HEK293 (cell line): ENCODE measurements at regions of chr19 and their contacts with region 1.

Region 1: DNA sequence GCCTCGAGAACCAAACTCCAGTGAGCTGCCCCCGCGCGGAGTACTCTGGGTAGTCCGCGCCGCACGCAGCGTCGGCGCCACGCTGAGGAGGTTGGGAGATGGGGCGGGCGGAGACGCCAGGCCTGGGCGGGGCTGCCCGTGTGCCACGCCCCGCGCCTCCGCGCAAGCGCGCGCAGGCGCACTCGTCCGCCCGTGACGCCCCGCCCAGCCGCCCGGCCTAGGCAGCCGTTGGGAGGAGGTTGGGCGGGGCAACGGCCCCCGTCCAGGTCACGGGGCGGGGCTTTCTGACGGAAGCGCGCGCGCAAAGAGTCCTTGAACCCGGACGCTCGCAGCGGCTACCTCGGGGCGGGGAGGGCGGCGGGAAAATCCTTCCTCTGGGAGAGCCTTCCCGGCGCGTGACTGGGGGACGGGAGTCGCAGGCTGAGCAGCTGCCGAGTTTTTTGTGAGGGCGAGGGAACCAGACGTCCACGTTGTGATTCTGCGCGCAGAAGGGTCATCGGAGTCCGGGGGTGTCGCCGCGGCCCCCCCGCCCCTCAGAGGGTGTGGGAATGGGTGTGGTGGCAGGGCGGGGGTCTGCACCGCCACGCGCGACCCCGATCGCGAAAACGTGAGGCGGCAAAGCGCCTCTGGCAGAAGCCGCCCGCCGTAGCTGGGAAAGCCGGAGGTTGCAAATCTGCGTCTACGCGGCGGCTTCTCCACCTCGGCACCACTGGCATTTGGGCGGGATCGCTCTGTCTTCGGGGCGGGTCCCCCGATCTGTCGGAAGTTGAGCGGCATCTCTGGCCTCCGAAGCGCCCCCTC is at the start of gene MED26:
- H3K4me3 ChIP-seq: peak within 1 kb of the TSS; percentile 89
- H3K27ac ChIP-seq: peak within 1 kb of the TSS; percentile 92
- H3K4me1 ChIP-seq: no peaks in the 10 kb centered on the region
- CTCF ChIP-seq: no peak

Region 2: DNA sequence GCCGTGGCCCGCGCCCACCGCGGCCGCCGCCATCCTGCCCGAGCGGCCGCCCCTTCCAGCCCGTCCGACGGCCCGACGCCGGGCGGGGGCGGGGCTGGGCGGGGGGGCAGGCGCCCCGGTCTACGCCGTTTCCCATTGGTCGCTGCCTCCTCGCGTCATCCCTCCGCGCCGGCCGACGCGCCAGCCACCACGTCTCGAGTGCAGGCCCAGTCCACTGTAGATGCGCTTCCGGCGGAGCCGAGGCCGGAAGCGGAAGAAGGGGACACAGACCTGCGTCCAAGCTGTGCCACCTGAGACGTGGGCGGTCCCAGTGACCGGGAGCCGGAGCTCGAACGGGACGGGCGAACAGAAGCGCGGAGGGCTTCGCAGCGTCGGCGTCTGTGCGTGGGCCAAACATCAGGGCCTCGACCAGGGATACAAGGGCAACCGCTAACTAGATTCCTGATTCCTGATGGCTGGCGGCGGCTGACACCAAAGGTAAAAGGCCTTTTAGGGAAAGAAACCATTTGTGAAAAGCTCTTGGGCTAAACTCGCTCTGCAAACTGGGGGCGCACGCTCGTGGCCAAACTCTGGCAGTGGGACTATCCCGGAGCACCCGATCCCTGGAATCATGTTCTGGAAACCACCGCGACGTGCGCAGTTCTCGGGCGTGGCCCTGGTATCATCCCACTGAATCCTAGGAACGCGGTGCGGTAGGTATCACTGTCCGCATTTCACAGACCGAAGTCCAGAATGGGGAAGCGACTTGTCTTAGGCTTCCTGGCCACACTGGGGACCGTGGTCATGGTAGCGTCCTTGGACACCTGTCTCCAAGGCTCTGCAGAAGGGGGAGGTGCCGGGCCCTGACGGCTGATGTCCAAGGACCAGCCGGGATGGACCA is 55.8 kb before region 1 on chr19 and contains the start of gene SLC35E1:
- CTCF ChIA-PET with region 1: no interaction called
- POLR2A ChIA-PET with region 1: interaction called, 12 read pairs
- H3K4me3 ChIP-seq: peak within 1 kb of the TSS; percentile 82
- H3K27ac ChIP-seq: peak within 1 kb of the TSS; percentile 76
- H3K4me1 ChIP-seq: peaks cover 2% of the 10 kb centered on the region; the same call in 1 of the 2 replicates
- CTCF ChIP-seq: no peak; the same call in 1 of the 2 replicates

Region 3: DNA sequence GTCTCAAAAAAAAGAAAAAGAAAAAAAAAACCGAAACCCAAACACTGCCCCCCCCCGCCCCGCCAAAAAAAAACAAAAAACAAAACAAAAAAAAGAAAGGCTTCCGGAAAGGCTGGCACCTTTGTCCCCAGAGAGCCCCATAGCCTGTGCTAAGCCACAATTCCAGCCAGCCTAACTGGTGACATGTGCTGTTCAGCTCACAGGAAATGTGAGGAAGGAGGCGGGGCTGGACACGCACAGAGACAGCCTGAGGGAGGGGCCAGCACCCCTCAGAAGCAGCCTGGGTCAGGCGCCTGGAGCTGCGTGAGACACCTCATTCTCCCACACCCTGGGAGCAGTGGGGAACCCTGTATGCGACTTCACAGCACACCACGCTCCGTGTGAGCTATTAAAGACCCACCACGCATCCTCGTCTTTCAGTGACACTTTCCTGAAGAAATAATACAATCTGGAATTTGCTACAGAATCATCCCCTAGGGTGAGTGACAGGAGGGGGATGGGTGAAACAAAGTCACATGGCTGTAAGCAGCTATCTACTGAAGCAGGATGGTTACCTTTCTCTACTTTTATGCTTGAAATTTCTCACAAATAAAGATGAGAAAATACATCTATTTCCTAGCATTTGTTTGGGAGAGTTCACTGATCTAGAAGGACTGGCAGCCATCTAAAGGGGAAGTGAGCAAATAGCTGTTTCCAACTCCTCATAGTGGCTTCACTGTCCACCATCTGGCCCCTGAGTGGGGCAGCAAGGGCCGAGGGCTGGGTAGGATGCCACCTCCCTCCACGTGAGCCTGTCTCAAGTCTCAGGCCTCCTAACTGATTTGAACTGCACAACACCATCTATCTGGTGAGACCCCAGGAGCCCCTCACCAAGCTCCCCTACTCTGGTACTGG is 43.9 kb before region 1 on chr19:
- CTCF ChIA-PET with region 1: no interaction called
- POLR2A ChIA-PET with region 1: interaction called, 20 read pairs
- H3K4me3 ChIP-seq: peak overlapping the region; percentile 23
- H3K27ac ChIP-seq: no peak overlapping the region
- H3K4me1 ChIP-seq: peaks cover 25% of the 10 kb centered on the region
- CTCF ChIP-seq: no peak

Region 4: GRCh38 chr19:16659831-16660708 is 31.7 kb after region 1 on chr19 and contains the start of gene SMIM7:
- CTCF ChIA-PET with region 1: no interaction called
- POLR2A ChIA-PET with region 1: interaction called, 12 read pairs
- H3K4me3 ChIP-seq: peak within 1 kb of the TSS; percentile 99
- H3K27ac ChIP-seq: peak within 1 kb of the TSS; percentile 55; the same call in 1 of the 2 replicates
- H3K4me1 ChIP-seq: no peaks in the 10 kb centered on the region
- CTCF ChIP-seq: peak; percentile 82; the same call in 1 of the 2 replicates